Panc1 (cell line): ENCODE measurements at regions of chr10 and their contacts with region 1.

Region 1: GRCh38 chr10:110547139-110547761 is 20.2 kb upstream of the SMC3 start:
- DNase-seq: no peak
- ATAC-seq: peak; percentile 76; the same call in 1 of the 2 replicates
- H3K4me3 ChIP-seq: no peak overlapping the region
- H3K27ac ChIP-seq: no peak overlapping the region
- H3K4me1 ChIP-seq: no peaks in the 10 kb centered on the region
- H3K27me3 ChIP-seq: peaks cover 18% of the 10 kb centered on the region; the same call in 1 of the 2 replicates
- CTCF ChIP-seq: peak; percentile 86

Region 2: DNA sequence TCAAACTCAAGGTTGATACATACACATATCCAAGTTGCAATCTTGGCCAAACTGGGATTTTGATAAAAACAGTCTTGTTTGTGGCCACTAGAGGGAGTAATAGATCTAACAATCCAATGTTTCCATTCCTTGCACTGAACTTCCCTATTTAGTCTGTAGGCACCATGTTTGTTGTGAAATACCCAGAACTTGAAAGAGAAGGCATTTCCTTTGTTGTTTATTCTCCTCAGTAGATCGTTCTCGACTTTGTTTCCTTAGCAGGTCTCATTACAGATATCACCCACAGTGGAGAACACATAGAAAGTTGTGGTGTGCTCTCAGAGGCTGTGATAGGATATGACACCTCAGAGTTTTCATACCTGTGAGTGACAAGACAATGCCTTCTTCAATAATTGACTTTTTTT is 410.1 kb before region 1 on chr10:
- CTCF ChIA-PET with region 1: no interaction called
- POLR2A ChIA-PET with region 1: no interaction called
- in situ Hi-C with region 1: no loop called
- intact Hi-C with region 1: loop called (anchors 5 kb)
- DNase-seq: peak; percentile 59
- ATAC-seq: peak; percentile 84
- H3K4me3 ChIP-seq: no peak overlapping the region
- H3K27ac ChIP-seq: no peak overlapping the region
- H3K4me1 ChIP-seq: no peaks in the 10 kb centered on the region
- H3K27me3 ChIP-seq: no peaks in the 10 kb centered on the region
- CTCF ChIP-seq: peak; percentile 78; the same call in 1 of the 2 replicates

Region 3: DNA sequence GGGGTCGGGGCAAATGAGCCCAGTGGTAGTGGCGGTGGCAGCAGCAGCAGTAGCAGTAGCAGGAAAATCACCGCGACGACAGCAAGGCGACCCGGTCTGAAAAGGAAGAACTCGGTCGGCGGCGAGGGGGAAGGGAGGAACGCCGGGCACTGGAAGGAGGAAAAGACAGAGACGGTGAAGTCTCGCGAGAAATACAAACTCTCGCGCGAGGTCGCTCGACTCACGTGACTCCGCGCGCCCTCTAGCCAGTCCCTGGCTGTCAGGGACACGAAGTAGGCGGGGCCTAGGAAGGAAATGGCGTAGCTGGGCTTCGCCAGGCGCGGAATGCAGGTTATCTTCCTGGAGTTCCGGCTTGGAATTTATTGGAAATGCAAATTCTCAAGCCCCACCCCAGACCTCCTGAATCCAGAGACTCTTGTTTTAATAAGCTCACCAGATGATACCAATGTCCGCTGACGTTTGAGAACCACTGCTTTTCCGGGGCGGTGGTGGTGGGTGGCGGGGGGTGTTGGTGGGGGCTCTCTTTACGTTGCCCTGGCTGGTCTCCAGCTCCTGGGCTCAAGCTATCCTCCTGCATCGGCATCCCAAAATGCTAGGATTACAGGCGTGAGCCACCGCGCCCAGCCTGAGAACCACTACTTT is 242.3 kb before region 1 on chr10 and contains the start of gene SMNDC1:
- CTCF ChIA-PET with region 1: interaction called, 7 read pairs
- POLR2A ChIA-PET with region 1: interaction called, 4 read pairs
- in situ Hi-C with region 1: no loop called
- intact Hi-C with region 1: loop called (anchors 1 kb)
- DNase-seq: peak; percentile 91
- ATAC-seq: peak; percentile 97
- H3K4me3 ChIP-seq: peak within 1 kb of the TSS; percentile 97 to 98
- H3K27ac ChIP-seq: peak within 1 kb of the TSS; percentile 96
- H3K4me1 ChIP-seq: peaks cover 22% of the 10 kb centered on the region
- H3K27me3 ChIP-seq: no peaks in the 10 kb centered on the region
- CTCF ChIP-seq: no peak
- total RNA-seq, gene SMNDC1: 62.2 TPM

Region 4: DNA sequence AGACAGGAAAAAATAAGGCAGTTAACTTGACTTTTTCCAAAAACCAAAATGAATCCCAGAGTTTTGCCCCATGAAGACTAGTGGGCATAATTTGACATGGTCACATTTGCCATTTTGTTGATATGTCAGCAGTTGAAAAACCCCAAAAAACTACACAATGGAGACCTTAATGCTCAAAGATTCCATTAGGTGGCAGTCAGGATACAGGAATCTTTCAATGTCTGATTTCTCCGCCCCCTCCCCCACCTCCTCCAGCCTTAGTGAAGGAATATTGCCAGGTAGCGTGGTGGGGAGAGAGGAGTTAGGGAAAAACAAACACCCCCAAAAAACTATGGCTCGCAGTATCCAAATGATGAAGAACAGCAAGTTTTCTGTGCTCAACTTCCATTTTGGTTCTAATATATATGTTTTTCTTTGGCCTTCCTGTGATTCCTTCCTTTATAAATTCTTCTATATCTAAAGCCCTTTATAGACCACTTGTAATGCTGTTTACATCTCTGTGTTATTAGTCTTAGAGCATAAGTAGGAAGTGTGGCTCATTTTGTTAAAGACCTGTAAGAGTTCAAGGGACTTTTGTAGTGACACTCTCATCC is 235.8 kb before region 1 on chr10:
- CTCF ChIA-PET with region 1: no interaction called
- POLR2A ChIA-PET with region 1: interaction called, 6 read pairs
- in situ Hi-C with region 1: no loop called
- intact Hi-C with region 1: loop called (anchors 1 kb)
- DNase-seq: peak; percentile 65
- ATAC-seq: peak; percentile 86
- H3K4me3 ChIP-seq: no peak overlapping the region
- H3K27ac ChIP-seq: peak overlapping the region; percentile 45; the same call in 1 of the 2 replicates
- H3K4me1 ChIP-seq: no peaks in the 10 kb centered on the region; the same call in 1 of the 2 replicates
- H3K27me3 ChIP-seq: no peaks in the 10 kb centered on the region
- CTCF ChIP-seq: peak; percentile 83

Region 5: DNA sequence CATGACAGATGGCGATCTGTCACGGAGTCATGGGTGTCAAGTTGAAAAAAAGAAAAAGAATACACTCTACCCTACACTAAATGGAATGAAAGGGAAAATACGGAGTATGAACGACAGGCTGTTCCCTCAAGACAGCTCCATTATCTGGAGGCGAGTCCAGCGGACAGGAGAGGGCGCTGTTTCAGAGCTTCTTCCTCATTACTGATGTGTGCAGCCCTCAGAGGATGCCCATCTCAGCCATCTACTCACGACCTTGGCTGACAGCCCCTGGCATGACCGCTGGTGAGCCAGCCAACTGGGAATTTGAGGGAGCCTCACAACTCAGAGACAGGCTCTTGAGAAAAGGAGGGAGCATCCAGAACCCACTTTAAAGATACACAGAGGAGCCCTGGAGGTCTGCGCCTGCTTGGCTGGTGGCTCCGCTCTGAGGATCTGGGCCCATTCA is 192.9 kb before region 1 on chr10:
- CTCF ChIA-PET with region 1: interaction called, 4 read pairs
- POLR2A ChIA-PET with region 1: no interaction called
- in situ Hi-C with region 1: no loop called
- intact Hi-C with region 1: loop called (anchors 5 kb)
- DNase-seq: peak; percentile 82
- ATAC-seq: peak; percentile 80
- H3K4me3 ChIP-seq: 0 out of 4 replicates have a peak overlapping the region, but pooled peaks of 1 of the 2 experiments have one; percentile 12
- H3K27ac ChIP-seq: peak overlapping the region; percentile 42; the same call in 1 of the 2 replicates
- H3K4me1 ChIP-seq: peaks cover 26% of the 10 kb centered on the region
- H3K27me3 ChIP-seq: no peaks in the 10 kb centered on the region
- CTCF ChIP-seq: peak; percentile 94

Region 6: DNA sequence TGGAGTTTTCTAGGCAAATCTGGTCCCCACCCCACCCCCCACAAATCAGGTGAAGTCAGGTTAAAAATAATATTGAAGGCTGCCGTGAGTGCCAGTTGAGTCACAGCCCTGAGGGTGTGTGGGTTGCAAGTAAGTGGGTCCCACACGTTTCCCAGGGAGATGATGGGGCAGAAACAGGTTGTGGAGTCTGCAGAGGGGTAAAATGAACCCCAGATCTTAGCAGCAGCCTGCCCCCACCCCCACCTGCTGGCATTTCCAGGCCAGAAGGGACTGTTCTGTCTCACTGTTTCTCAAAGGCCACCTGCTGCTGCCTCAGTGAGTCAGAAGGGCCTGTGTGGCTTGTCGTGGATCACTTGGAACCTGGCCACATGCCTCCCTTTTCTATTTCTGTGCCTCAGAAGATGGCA is 182.7 kb before region 1 on chr10:
- CTCF ChIA-PET with region 1: no interaction called
- POLR2A ChIA-PET with region 1: no interaction called
- in situ Hi-C with region 1: no loop called
- intact Hi-C with region 1: no loop called
- DNase-seq: no peak
- ATAC-seq: no peak
- H3K4me3 ChIP-seq: no peak overlapping the region
- H3K27ac ChIP-seq: no peak overlapping the region
- H3K4me1 ChIP-seq: no peaks in the 10 kb centered on the region
- H3K27me3 ChIP-seq: no peaks in the 10 kb centered on the region
- CTCF ChIP-seq: no peak

Region 7: GRCh38 chr10:110497438-110498086 is 49.7 kb before region 1 on chr10 and contains the start of gene DUSP5:
- CTCF ChIA-PET with region 1: interaction called, 4 read pairs
- POLR2A ChIA-PET with region 1: no interaction called
- in situ Hi-C with region 1: no loop called
- intact Hi-C with region 1: loop called (anchors 5 kb)
- DNase-seq: no peak
- ATAC-seq: peak; percentile 72
- H3K4me3 ChIP-seq: peak within 1 kb of the TSS; percentile 87 to 92
- H3K27ac ChIP-seq: peak within 1 kb of the TSS; percentile 94
- H3K4me1 ChIP-seq: peaks cover 48% of the 10 kb centered on the region
- H3K27me3 ChIP-seq: no peaks in the 10 kb centered on the region
- CTCF ChIP-seq: no peak
- total RNA-seq, gene DUSP5: 30.1 TPM

Region 8: DNA sequence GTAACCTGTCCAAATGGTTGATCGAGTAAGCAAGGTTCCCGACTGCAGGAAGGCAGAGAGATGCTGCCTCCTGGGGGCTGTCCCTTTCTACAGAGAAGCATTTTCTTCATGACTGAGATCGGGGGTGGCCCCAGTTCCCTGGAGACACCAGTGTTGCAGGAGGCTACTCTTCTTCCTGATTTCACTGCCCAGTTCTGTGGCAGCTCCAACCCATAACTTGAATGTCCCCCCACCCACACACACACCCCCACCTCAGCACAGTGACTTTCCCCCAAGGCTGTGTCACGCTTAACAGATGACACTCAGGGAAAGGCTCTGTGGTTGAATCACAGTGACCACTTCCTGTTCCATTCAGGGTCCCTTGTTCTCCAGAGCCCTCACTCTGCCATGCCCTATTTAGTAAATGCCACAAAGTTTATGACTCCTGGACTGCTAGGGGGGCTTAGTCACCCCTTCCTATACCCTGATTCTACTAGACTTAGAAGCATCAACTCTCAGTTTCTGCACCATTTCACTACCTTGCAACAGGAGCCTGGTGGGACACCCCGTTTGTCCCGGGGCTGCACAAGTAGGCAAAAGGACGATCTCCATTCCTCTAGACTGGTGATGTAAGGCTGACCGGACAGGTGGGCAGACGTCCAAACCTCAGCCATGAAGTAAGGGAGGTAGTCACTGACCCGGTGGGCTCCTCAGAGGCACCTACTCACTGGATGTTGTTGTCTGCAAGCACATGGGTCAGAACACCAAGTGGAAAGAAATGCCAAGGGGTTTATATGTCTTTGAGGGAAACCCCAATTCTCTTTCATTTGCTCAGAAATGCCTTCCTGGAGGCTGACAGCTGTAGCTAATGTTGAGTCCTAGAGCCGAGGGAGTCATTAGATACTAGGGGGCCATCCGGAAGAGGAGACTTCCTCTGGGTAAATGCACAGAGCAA is 11.0 kb before region 1 on chr10:
- CTCF ChIA-PET with region 1: no interaction called
- POLR2A ChIA-PET with region 1: no interaction called
- in situ Hi-C with region 1: no loop called
- intact Hi-C with region 1: no loop called
- DNase-seq: no peak
- ATAC-seq: peak; percentile 80
- H3K4me3 ChIP-seq: no peak overlapping the region
- H3K27ac ChIP-seq: no peak overlapping the region
- H3K4me1 ChIP-seq: 0 out of 2 replicates have a peak, but pooled peaks cover 4% of the 10 kb centered on the region
- H3K27me3 ChIP-seq: no peaks in the 10 kb centered on the region
- CTCF ChIP-seq: peak; percentile 2; the same call in 1 of the 2 replicates

Region 9: DNA sequence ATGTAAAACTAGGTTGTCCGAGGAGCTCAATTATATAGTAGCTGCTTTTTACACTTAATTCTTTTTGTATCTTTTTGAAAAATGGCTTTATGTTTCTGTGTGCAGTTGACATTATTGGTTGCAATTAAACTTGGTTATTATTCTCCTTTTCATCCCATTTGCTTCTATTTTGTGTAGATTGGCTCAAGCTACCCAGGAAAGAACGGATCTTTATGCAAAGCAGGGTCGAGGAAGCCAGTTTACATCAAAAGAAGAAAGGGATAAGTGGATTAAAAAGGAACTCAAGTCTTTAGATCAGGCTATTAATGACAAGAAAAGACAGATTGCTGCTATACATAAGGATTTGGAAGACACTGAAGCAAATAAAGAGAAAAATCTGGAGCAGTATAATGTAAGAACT is 36.8 kb after region 1 on chr10:
- CTCF ChIA-PET with region 1: no interaction called
- POLR2A ChIA-PET with region 1: no interaction called
- in situ Hi-C with region 1: no loop called
- intact Hi-C with region 1: no loop called
- DNase-seq: no peak
- ATAC-seq: no peak
- H3K4me3 ChIP-seq: no peak overlapping the region
- H3K27ac ChIP-seq: no peak overlapping the region
- H3K4me1 ChIP-seq: no peaks in the 10 kb centered on the region
- H3K27me3 ChIP-seq: no peaks in the 10 kb centered on the region
- CTCF ChIP-seq: no peak

Region 10: GRCh38 chr10:110641256-110641655 is 94.0 kb after region 1 on chr10:
- CTCF ChIA-PET with region 1: no interaction called
- POLR2A ChIA-PET with region 1: no interaction called
- in situ Hi-C with region 1: no loop called
- intact Hi-C with region 1: no loop called
- DNase-seq: no peak
- ATAC-seq: no peak
- H3K4me3 ChIP-seq: no peak overlapping the region
- H3K27ac ChIP-seq: no peak overlapping the region
- H3K4me1 ChIP-seq: peaks cover 17% of the 10 kb centered on the region
- H3K27me3 ChIP-seq: peaks cover 43% of the 10 kb centered on the region
- CTCF ChIP-seq: no peak